Left lung (tissue), 14 donors: ENCODE measurements at regions of chr1 and their contacts with region 1.

Region 1: GRCh38 chr1:163174524-163175437 is 27.9 kb downstream of the RGS5 start:
- DNase-seq: peak in 3 of 4 donors; percentile 49 to 70 (median 69)
- ATAC-seq: peak; percentile 82
- H3K4me3 ChIP-seq: no peak overlapping the region
- H3K27ac ChIP-seq: no peak overlapping the region
- H3K4me1 ChIP-seq: peaks cover 0 to 11% of the 10 kb centered on the region in 2 donors
- H3K27me3 ChIP-seq: no peaks in the 10 kb centered on the region
- CTCF ChIP-seq: peak; percentile 79 to 94

Region 2: GRCh38 chr1:162854245-162854882 is 320.4 kb before region 1 on chr1:
- intact Hi-C with region 1: loop called in 1 of 2 experiments (anchors 10 kb)
- DNase-seq: peak in 3 of 4 donors; percentile 36 to 63 (median 52)
- ATAC-seq: peak; percentile 88
- H3K4me3 ChIP-seq: no peak overlapping the region
- H3K27ac ChIP-seq: no peak overlapping the region
- H3K4me1 ChIP-seq: no peaks in the 10 kb centered on the region
- H3K27me3 ChIP-seq: no peaks in the 10 kb centered on the region
- CTCF ChIP-seq: peak; percentile 58 to 59

Region 3: GRCh38 chr1:162878000-162878596 is 296.7 kb before region 1 on chr1:
- intact Hi-C with region 1: loop called in 1 of 2 experiments (anchors 10 kb)
- DNase-seq: peak in 2 of 4 donors; percentile 26 to 53
- ATAC-seq: peak; percentile 81
- H3K4me3 ChIP-seq: no peak overlapping the region
- H3K27ac ChIP-seq: no peak overlapping the region
- H3K4me1 ChIP-seq: no peaks in the 10 kb centered on the region
- H3K27me3 ChIP-seq: peaks cover 0 to 7% of the 10 kb centered on the region in 2 donors
- CTCF ChIP-seq: peak; percentile 57 to 71